Activated T-helper 1 cell treated with anti-CD3 and anti-CD28 coated beads, Interleukin-12 subunit alpha, Interleukin-12 subunit beta, Interleukin-2, Interleukin-4 antibody, amounts not matched to agents 30 ng/mL and 10 ng/mL and 1 ng/mL, durations not matched to agents 14 hours and 24 hours and 36 hours (primary cell): ENCODE measurements at regions of chr17 and their contacts with region 1.

Region 1: DNA sequence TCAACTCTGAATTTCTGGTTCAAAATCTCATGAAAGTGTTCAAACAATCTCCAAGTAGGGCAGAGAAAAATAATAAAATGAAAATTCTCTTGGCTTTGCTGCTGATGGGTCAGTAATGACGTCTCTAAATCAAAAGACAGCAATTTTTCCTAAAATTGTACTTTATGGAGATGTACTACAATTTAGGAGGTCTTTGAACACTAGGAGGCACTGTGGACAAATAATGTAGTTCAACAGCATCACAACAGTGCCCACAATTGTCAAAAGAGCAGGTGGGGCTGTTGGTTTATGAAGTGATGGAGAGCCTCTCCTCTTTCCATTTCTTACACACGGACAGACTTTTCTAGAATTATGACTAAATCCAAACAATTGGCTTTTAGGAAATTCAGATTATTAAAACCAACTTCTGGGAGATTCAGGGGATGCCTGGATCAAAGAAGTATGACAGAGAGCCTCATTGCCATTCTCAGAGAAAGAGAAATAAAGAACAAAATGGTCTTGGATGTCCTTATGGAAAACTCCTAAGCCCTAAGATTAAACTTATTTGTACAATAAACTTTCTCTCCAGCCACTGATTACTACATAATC is 23.8 kb downstream of the EZH1 start:
- DNase-seq: peak; percentile 9
- H3K4me3 Mint-ChIP-seq: no peak overlapping the region
- H3K27ac Mint-ChIP-seq: peak overlapping the region; percentile 22
- H3K4me1 Mint-ChIP-seq: peaks cover 5% of the 10 kb centered on the region
- H3K27me3 Mint-ChIP-seq: no peaks in the 10 kb centered on the region

Region 2: DNA sequence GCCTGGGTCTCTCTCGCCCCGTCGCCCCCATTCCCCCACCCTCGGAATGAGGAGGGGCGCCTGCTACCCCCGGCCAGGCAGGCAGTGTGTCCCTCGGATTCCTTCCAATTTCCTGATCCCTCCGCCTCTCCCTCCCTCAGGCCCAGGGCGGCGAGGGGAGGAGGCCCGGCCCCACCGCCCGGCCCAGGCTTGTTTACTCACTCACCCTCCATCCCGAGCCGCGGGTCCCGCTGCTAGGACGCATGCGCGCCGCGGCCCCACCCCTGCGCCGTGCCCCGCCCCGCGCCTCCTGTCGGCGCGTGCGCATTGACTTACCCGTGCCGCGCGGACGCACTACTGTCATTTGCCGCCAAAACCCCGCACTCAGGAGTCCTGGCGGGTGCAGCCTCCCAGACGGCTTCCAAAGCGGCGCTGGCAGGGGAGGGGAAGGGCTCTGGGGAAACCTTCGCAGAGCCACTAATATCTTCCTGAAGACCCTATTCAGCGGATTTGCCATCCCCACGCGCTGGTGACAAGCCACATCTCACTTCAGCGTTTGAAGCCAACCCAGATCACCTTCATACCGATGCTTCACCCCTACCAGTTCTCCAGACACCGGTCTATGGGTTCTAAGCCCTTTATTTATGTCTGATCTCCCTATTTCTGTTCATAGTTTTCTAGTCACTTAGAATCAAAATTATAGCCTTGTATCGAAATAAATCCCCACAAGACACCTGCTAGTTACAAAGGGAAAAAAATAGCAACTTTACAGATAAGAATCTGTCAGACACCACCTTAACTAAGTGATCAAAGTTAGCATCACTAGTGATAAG is 23.9 kb after region 1 on chr17 and contains the start of gene EZH1:
- intact Hi-C with region 1: loop called (anchors 2 kb)
- DNase-seq: peak; percentile 93
- H3K4me3 Mint-ChIP-seq: peak within 1 kb of the TSS; percentile 91
- H3K27ac Mint-ChIP-seq: peak within 1 kb of the TSS; percentile 83
- H3K4me1 Mint-ChIP-seq: peaks cover 15% of the 10 kb centered on the region
- H3K27me3 Mint-ChIP-seq: peaks cover 25% of the 10 kb centered on the region
- total RNA-seq, gene EZH1: 35.6 and 40.0 TPM in 2 replicates

Region 3: DNA sequence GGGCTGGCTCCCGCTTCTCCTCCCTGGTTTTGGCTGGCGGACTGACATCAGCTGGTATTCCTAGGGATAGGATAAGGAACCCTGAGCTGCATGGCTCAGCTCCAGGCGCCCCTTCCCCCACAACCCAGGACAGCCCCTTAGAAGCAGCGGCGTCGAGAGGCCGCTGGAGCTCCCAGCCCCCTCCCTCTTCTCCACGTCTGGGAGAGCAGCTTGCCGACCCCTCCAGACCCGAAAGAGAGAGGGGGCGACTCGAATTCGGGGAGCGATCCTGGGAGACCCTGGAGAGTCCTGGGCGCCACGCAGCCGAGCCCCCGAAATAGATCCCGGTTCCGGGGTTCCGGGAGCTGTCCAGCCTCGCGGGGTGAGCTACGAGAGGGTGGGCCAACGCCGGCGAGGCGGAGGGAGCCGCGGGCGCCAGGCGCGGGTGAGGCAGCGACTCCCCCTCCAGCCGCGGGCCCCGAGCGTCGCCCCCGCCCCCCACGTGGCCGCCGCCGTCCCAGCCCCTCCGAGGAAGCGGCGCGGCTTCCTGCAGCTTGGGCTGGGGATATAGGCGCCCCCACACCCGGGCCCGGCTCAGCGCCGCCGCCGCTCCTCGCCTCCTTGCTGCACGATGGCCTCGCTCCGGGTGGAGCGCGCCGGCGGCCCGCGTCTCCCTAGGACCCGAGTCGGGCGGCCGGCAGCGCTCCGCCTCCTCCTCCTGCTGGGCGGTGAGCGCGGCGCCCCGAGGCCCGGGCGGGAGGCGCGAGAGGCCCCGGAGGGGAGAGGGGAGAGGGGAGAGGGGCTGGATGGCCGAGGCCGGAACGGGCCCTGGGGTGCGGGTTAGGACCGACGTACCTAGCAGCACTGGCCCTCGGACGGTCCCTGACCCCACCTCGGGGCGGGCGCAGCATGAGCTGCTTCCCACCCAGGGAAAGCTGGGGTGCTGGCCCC is 39.8 kb after region 1 on chr17 and contains the start of gene RAMP2:
- intact Hi-C with region 1: loop called (anchors 1 kb)
- DNase-seq: no peak
- H3K4me3 Mint-ChIP-seq: peak within 1 kb of the TSS; percentile 54
- H3K27ac Mint-ChIP-seq: no peak within 1 kb of the TSS
- H3K4me1 Mint-ChIP-seq: peaks cover 6% of the 10 kb centered on the region
- H3K27me3 Mint-ChIP-seq: peaks cover 55% of the 10 kb centered on the region
- total RNA-seq, gene RAMP2: not detected in 2 replicates

Region 4: DNA sequence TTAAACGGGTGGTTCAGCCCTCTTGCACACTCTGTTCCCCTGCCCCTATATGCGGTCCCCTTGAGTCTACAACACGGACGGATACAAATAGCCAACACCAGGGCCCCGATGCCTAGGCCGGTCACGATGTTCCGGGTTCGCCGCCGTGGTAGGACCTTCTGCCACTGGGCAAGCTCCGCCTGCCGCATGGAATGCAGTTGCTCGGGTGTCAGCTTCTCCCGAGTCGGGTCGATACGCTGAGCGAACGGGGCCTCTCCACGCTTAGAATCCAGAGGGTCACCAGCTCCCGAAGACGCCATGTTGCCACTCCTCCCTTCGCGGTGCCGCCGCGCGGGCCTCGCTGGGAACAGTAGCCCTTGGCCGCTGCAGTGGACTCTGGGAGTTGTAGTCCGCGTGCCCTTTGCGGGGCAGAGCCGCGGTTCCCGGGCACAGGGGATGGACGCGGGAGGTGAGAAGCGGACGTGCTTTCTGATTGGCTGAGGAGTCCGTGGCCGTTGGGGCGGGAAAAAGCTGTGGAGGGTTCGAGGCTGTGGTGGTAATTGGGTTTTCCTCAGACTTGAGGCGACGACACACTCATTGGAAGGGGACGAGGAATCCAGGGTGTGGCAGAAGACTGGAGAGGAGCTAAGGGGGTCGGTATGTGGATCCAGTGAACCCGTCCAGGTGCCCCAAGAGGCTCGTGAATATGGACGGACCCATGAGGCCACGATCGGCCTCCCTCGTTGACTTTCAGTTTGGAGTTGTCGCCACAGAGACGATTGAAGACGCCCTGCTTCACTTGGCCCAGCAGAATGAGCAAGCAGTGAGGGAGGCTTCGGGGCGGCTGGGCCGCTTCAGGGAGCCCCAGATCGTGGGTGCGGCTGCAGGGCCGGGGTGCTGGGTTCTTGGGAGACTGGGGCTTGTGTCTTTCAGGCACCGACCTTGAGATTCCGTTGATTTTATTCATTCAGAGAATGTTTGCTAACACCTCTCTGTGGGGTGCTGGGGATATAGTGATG is 77.6 kb after region 1 on chr17 and contains the starts of genes CNTD1 and COA3:
- intact Hi-C with region 1: loop called (anchors 1 kb)
- DNase-seq: peak; percentile 73
- H3K4me3 Mint-ChIP-seq: peak within 1 kb of the TSS; percentile 90
- H3K27ac Mint-ChIP-seq: peak within 1 kb of the TSS; percentile 56
- H3K4me1 Mint-ChIP-seq: peaks cover 19% of the 10 kb centered on the region
- H3K27me3 Mint-ChIP-seq: peaks cover 3% of the 10 kb centered on the region
- total RNA-seq, gene CNTD1: not detected in 2 replicates
- total RNA-seq, gene COA3: 53.5 and 59.3 TPM in 2 replicates

Region 5: GRCh38 chr17:42928714-42929496 is 207.8 kb after region 1 on chr17:
- intact Hi-C with region 1: loop called (anchors 1 kb)
- DNase-seq: no peak
- H3K4me3 Mint-ChIP-seq: no peak overlapping the region
- H3K27ac Mint-ChIP-seq: peak overlapping the region; percentile 47
- H3K4me1 Mint-ChIP-seq: peaks cover 11% of the 10 kb centered on the region
- H3K27me3 Mint-ChIP-seq: peaks cover 5% of the 10 kb centered on the region